ENCODE measurements at regions of chr18 and their contacts with region 1.

Region 1: DNA sequence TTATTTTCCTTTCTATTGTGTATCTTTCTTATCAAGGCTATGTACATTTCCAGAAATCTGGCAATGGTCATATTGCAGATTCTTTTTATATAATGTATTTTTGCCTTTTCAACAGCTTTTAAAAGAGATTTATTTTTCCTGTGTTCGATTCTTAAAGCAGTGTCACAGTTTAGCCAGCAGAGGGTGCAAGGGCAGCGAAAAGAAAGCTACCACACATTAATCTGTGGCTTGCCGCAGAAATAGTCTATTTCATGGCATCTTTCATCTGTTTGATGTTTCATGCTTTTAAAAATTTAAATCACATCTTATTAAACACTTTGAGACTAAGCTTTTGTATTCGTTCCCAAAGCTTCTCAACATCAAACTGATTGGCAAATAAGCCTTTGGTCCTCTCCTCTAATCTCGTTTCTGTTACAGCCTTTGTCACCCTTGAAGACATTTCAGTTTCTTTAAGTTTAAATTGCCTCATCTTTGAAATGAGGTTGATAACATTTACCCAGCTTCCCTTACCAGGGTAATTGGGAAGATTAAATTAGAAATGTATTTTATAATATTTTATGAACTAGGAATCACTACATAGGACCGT is 73.3 kb downstream of the PIK3C3 start:
- DNase-seq: peak; percentile 71
- H3K4me3 Mint-ChIP-seq: no peak overlapping the region
- H3K27ac Mint-ChIP-seq: no peak overlapping the region
- H3K4me1 Mint-ChIP-seq: peaks cover 14% of the 10 kb centered on the region
- H3K27me3 Mint-ChIP-seq: no peaks in the 10 kb centered on the region

Region 2: GRCh38 chr18:41954827-41955613 is 73.3 kb before region 1 on chr18 and contains the start of gene PIK3C3:
- intact Hi-C with region 1: loop called (anchors 2 kb)
- DNase-seq: peak; percentile 98
- H3K4me3 Mint-ChIP-seq: peak within 1 kb of the TSS; percentile 97
- H3K27ac Mint-ChIP-seq: peak within 1 kb of the TSS; percentile 99
- H3K4me1 Mint-ChIP-seq: peaks cover 22% of the 10 kb centered on the region
- H3K27me3 Mint-ChIP-seq: no peaks in the 10 kb centered on the region
- total RNA-seq, gene PIK3C3: 57.1 and 57.7 TPM in 2 replicates

Region 3: DNA sequence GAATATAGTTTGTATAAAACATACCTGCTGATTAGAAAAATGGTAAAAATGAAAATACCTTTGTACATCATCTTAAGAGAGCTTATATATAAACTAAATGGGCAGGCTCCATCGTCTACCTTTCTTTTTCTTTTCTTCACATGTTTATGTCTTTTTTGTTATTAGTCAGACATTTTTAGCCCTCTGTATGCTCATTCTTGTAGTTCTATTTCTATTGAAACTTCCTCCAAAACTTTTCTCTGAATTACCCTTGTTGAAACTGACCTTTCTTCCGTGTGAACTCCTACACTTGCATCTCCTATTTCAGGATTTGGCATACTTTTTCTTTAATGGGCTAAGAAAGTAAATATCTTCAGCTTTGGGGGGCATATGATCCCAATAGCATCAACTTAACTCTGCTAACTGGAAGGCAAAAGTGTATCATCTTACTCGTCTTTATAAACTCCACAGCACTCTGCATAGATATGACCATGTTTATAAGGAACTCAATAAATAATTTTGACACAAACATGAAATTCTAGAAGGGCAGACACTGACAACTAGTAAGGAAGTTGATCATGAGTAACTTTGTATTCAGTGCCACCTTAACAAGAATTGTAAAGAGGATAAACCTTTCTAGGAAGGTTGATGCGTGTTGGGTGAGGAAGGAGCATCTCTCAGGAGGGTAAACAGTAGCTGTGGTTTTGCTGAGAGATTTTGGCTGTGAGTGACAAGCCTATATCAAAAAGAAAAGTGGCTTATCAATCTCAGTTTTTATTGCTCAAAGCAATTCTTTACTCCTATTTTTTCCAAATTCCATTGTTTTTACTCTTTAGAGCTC is 54.3 kb after region 1 on chr18:
- intact Hi-C with region 1: loop called (anchors 5 kb)
- DNase-seq: no peak
- H3K4me3 Mint-ChIP-seq: peak overlapping the region; percentile 52
- H3K27ac Mint-ChIP-seq: peak overlapping the region; percentile 85
- H3K4me1 Mint-ChIP-seq: peaks cover 21% of the 10 kb centered on the region
- H3K27me3 Mint-ChIP-seq: no peaks in the 10 kb centered on the region